ENCODE measurements at regions of chr11 and their contacts with region 1.

Region 1: DNA sequence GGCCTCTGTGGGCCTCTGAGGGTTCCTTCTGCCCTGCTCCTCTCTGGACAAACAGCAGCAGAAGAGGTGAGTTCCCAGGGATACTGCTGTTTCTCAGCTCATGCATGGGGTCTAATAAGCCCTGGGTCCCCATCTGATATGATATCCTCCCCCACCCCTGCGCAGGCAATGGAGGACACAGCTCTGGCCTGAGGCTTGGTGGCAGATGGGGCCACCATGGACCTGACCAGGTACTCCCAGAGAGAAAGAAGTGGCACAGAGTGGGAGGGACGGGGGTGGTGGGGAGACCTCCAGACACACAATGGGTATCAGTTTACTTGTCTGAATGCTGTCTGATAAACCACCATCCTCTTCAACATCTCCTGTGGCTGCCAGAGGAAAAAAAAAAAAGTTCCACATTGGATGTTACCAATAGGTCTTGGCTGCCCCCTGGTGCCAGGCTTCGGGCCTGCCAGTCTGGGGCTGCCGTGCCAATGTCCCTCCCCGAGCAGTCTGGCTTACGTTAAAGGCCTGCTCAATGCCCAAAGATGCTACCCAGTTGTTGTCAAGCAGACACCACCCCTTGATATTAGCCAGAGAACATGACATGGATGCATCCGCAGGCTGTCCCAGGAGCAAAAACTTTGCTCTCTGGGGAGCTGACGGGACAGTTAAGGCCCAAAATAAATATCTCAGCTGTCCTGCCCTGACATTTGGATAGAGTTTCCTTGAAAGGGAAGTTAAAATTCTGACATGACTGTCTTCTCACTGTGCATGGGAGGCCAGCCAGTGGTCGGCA is 27.9 kb upstream of the ABCC8 start:
- DNase-seq: peak; percentile 70 to 92 (median 88)
- ATAC-seq: peak; percentile 88 to 97 (median 94)
- H3K4me3 ChIP-seq: no peak overlapping the region
- H3K27ac ChIP-seq: no peak overlapping the region
- H3K4me1 ChIP-seq: no peaks in the 10 kb centered on the region
- H3K27me3 ChIP-seq: no peaks in the 10 kb centered on the region
- CTCF ChIP-seq: peak; percentile 78 to 95 (median 91)

Region 2: DNA sequence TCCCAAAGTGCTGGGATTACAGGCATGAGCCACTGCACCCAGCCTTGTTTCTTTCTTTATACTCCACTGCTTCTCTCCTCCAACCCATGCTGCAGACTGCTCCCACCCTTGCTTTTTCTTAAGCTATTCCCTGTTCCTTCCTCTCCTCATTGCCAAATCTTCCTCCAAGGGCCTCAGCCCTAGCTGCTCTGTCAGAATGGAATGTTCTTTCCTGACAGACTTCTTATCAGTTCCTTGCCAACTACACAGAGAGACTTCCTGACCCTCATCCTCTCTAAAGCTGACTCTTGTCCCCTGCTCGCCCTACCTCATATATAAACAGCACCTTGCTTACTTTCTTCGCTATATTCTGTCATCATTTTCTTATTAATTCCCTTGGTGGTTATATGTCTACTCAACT is 279.8 kb before region 1 on chr11:
- intact Hi-C with region 1: loop called in 1 of 3 experiments (anchors 5 kb)
- DNase-seq: no peak
- ATAC-seq: no peak
- H3K4me3 ChIP-seq: no peak overlapping the region
- H3K27ac ChIP-seq: no peak overlapping the region
- H3K4me1 ChIP-seq: no peaks in the 10 kb centered on the region
- H3K27me3 ChIP-seq: no peaks in the 10 kb centered on the region
- CTCF ChIP-seq: no peak

Region 3: GRCh38 chr11:17343907-17344306 is 160.6 kb before region 1 on chr11:
- intact Hi-C with region 1: no loop called
- DNase-seq: no peak
- ATAC-seq: no peak
- H3K4me3 ChIP-seq: no peak overlapping the region
- H3K27ac ChIP-seq: no peak overlapping the region
- H3K4me1 ChIP-seq: no peaks in the 10 kb centered on the region
- H3K27me3 ChIP-seq: no peaks in the 10 kb centered on the region
- CTCF ChIP-seq: no peak

Region 4: DNA sequence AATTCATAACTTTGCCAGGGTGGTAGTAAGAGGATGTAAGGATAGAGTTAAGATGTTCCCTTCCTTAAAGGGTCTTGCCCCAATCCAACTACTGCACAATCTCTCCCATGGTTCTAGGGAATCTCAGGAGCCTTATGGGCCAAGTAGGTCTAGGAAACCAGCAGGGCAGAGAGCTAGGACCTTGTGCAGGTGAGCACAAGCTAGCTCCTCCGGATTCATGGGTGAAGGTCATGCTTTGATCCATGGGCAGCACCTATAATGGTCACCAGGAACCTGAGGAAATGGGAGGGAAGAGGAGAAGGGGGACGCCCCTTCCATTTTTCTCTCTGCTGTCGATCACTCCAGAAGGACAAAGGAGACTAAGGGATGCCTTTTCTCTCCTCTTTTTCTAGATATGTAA is 132.9 kb before region 1 on chr11:
- intact Hi-C with region 1: loop called in 1 of 3 experiments (anchors 10 kb)
- DNase-seq: no peak
- ATAC-seq: no peak
- H3K4me3 ChIP-seq: no peak overlapping the region
- H3K27ac ChIP-seq: no peak overlapping the region
- H3K4me1 ChIP-seq: no peaks in the 10 kb centered on the region
- H3K27me3 ChIP-seq: no peaks in the 10 kb centered on the region
- CTCF ChIP-seq: no peak

Region 5: GRCh38 chr11:17384002-17384511 is 120.5 kb before region 1 on chr11:
- intact Hi-C with region 1: loop called (anchors 2 to 10 kb)
- DNase-seq: peak in 5 of 6 donors; percentile 57 to 94 (median 79)
- ATAC-seq: peak; percentile 39 to 77 (median 64)
- H3K4me3 ChIP-seq: no peak overlapping the region
- H3K27ac ChIP-seq: no peak overlapping the region
- H3K4me1 ChIP-seq: peaks cover 0 to 6% (median 0%) of the 10 kb centered on the region in 3 donors
- H3K27me3 ChIP-seq: no peaks in the 10 kb centered on the region
- CTCF ChIP-seq: peak; percentile 84 to 91 (median 86)

Measured in pancreas (tissue), 10 donors.